ENCODE measurements at regions of chr1 and their contacts with region 1.

Region 1: GRCh38 chr1:39026051-39026865 is at the start of gene NDUFS5:
- DNase-seq: peak; percentile 77 to 98 (median 91)

Region 2: GRCh38 chr1:39081266-39082009 is 55.2 kb after region 1 on chr1:
- intact Hi-C with region 1: loop called (anchors 5 kb)
- DNase-seq: peak in 5 of 10 donors; percentile 15 to 90 (median 81)

Region 3: DNA sequence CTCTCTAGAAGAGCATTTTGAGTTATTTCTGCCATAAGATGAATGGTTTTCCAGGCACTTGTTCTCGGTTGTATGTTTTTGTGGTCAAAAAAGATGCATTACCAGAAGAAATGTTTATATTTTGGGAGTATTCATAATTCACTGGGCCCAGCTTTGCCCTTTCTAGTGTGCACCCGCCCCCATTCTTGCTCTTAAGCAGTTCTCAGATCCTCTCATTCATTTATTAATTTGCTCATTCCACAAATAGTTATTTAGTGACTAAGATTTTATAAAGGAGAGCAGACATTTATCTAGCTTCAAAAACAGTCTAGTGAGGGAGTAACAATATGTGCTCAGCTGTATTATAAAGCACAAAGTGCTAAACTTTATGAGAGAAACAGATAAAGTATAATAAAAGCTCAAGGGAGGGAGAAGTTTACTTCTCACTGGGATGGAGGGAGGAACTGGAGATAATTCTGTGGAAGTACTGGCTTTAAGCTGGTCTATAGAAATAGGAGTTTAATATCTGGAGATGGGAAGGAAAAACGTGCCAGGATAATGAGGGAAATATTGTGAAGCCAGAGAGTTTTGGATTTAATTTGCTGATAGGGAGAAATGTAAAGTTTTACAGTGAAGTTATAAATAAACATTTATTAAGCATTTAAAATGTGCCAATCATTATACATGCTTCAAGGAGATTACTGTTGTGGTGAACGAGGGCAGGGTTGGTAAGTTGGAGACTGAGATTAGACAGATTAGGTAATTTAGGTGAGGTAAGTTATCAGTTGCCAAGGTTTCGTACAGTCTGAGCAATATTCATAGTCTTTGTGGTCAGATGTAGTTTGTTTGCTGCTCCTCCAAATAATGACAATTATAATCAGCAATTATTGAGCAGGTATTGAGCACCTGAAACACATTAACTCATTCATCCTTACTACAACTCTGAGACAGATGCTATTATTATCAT is 169.2 kb after region 1 on chr1:
- intact Hi-C with region 1: no loop called
- DNase-seq: no peak

Measured in posterior cingulate gyrus (tissue), 11 donors.